K562 (cell line): ENCODE measurements at regions of chr9 and their contacts with region 1.

Region 1: DNA sequence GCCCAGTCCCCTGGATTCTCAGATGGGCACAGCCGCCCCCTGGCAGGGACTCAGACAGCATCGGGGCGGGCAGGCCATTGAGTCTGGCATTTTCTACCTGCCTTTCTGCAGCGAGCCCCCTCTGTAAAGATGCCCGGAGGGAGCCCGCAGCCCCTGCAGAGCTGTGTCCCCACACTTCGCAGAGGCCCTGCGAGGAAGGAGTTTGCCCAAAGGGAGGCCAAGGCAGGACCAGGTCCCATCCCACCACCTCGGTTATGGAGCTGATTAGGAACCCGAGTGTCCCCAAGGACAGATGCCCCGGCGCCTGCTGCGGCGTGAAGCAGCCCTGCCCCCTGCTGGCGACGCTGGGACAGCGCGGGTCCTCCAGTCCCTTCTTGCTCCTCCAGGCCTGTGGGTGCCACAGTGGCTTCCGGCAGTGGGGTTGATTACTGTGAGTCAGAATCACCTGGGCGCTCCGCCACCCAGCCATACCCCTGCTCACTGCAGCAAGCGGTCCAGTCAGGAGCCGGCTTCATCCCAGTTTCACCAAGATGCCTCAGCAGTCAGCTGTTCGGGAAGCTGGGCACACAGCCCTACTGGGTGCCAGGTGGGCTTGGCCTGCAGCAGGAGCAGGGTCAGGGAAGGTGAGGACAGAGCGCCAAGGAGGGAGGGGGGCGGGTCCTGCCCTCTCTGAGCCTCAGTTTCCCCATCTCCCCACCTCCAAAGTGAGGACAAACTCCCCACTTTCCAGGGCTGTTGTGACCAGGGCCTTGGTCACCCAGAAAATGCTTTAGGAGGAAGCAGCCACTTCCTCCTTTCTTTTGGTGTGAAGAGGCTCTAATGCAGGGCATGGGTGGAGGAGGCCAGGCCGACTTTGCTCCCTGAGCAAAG is 117.1 kb downstream of the RXRA start:
- DNase-seq: peak; percentile 82 to 90 (median 88)
- ATAC-seq: peak; percentile 98
- H3K4me3 ChIP-seq: no peak overlapping the region
- H3K27ac ChIP-seq: no peak overlapping the region
- H3K4me1 ChIP-seq: peaks cover 0 to 34% of the 10 kb centered on the region in 2 experiments; a peak in 1 of 5 replicates
- H3K27me3 ChIP-seq: 0 out of 5 replicates have a peak, but pooled peaks cover 0 to 5% of the 10 kb centered on the region in 2 experiments
- CTCF ChIP-seq: peak; percentile 93 to 96 (median 93)
- EP300 ChIP-seq: no peak
- POLR2A ChIP-seq: no peak
- RAD21 ChIP-seq: peak; percentile 95 to 98

Region 2: GRCh38 chr9:134171316-134172197 is 271.8 kb before region 1 on chr9:
- CTCF ChIA-PET with region 1: interaction called, 52 read pairs
- POLR2A ChIA-PET with region 1: interaction called, 3 read pairs
- in situ Hi-C with region 1: loop called (anchors 5 kb)
- intact Hi-C with region 1: loop called (anchors 1 kb)
- DNase-seq: no peak
- ATAC-seq: no peak
- H3K4me3 ChIP-seq: no peak overlapping the region
- H3K27ac ChIP-seq: no peak overlapping the region
- H3K4me1 ChIP-seq: peaks cover 2 to 44% of the 10 kb centered on the region in 2 experiments; a peak in 3 of 5 replicates
- H3K27me3 ChIP-seq: peaks cover 9 to 39% of the 10 kb centered on the region in 2 experiments; a peak in 4 of 5 replicates
- CTCF ChIP-seq: no peak
- EP300 ChIP-seq: no peak
- POLR2A ChIP-seq: no peak
- RAD21 ChIP-seq: no peak

Region 3: DNA sequence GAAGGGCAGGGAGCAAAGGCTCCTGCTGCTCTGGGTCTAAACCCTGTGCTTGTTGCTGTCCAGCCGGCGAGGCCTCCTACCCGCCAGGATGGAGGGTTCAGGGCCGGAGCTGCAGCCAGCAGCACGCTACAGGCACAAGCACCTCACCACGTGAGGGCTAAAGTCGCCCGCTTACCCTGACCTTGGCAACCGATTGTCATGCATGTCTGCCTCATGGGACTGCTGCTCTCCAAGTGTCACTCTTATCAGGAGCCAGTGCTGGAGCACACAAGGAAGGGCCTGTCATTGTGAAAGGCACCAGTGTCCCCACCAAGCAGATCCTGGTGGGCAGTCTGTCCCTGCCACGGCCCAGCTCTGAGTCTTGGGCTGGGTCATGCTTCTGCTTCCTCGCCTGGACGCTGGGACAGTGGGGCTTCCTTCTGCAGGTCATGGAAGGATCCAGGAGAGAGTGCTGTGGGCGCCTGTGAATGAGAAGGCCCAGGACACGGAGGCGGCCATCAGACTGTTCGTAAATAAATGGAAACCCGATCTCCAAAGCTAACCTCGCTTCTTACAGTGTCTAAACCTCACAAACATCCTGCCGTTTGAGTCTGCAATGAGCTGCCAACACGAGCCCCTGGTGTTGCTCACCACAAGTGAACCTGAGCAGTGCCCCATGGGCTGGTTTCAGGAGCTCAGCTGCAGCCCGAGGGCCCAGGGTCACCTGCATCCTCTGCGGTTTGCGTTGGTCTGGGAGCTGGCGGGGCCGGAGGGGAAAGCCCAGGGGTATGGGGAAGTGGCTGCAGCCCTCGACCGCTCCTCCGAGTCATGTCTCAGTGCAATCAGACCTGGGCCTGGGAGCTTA is 175.3 kb before region 1 on chr9:
- CTCF ChIA-PET with region 1: no interaction called
- POLR2A ChIA-PET with region 1: no interaction called
- in situ Hi-C with region 1: no loop called
- intact Hi-C with region 1: loop called (anchors 2 kb)
- DNase-seq: no peak
- ATAC-seq: no peak
- H3K4me3 ChIP-seq: no peak overlapping the region
- H3K27ac ChIP-seq: no peak overlapping the region
- H3K4me1 ChIP-seq: peaks cover 0 to 3% of the 10 kb centered on the region in 2 experiments; a peak in 1 of 5 replicates
- H3K27me3 ChIP-seq: peaks cover 39 to 83% of the 10 kb centered on the region in 2 experiments
- CTCF ChIP-seq: no peak
- EP300 ChIP-seq: no peak
- POLR2A ChIP-seq: no peak
- RAD21 ChIP-seq: no peak

Region 4: DNA sequence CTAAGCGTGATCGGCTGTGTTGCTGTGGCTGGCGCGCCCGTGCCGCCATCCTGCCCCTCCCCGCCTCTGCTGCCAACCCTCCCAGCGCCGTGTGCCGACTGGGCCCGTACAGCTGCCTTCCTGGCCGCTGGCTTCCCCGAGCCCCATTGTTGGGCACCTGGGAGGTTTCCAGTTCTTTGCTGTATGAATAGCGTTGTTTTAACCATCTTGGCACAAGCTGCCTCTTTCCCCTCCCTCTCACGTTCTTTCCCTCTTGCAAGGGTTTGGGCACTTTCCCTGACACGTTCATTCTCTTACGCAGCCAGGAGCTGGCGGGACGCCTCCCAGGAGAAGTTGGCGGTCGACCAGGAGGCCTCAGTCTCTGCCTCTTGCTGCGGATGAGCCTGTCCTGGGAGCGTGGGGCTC is 160.3 kb before region 1 on chr9:
- CTCF ChIA-PET with region 1: no interaction called
- POLR2A ChIA-PET with region 1: no interaction called
- in situ Hi-C with region 1: no loop called
- intact Hi-C with region 1: no loop called
- DNase-seq: no peak
- ATAC-seq: no peak
- H3K4me3 ChIP-seq: no peak overlapping the region
- H3K27ac ChIP-seq: no peak overlapping the region
- H3K4me1 ChIP-seq: peaks cover 0 to 15% of the 10 kb centered on the region in 2 experiments; a peak in 1 of 5 replicates
- H3K27me3 ChIP-seq: peaks cover 27 to 77% of the 10 kb centered on the region in 2 experiments; a peak in 4 of 5 replicates
- CTCF ChIP-seq: no peak
- EP300 ChIP-seq: no peak
- POLR2A ChIP-seq: no peak
- RAD21 ChIP-seq: no peak